Esophagus muscularis mucosa (tissue), 4 donors: ENCODE measurements at regions of chr3 and their contacts with region 1.

Region 1: DNA sequence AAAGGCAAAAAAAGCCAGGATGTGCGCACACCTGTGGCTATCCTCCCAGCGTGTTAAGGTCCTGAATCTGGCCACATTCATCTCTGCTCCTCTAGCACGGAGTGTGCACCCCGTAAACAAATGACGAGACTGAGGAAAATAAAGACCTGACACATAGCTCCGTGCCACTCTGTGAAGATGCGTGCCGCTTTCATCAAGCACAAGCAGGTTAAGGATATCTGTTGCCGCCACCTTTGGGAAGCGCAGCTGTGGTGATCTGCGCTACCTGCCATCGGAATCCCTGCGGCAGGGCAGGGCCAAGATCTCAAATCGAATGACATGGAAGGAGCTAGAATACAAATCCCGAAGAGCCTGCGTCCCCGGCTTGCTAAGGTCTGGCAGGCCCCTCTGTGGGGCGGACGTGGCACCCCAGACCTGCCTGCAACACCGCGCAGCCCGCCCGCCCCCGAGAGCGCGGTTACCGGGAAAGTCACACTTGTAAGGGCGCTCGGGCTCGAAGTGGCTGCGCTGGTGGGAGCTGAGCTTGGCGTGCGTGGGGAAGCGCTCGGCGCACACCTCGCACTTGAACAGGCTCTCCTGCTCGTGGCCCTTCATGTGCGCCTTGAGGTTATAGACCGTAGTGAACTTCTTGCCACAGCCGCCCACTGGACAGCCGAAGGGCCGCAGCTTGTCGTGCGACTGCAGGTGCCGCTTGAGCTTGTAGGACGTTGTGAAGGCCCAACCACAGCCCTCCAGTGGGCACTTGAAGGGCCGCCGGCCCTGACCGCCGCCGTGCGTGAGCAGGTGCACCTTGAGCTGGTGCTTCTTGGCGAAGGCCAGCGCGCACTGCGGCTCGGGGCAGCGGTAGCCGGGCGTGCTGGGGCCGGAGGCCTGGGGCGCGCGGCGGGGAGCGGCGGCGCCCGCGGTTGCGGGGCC is 936 bp downstream of the ZXDC start:
- DNase-seq: no peak
- H3K4me3 ChIP-seq: peak overlapping the region; percentile 67 to 79 (median 71)
- H3K27ac ChIP-seq: peak overlapping the region; percentile 93 to 99 (median 94)
- H3K4me1 ChIP-seq: peaks cover 44 to 56% (median 49%) of the 10 kb centered on the region in 4 donors
- H3K27me3 ChIP-seq: no peaks in the 10 kb centered on the region
- CTCF ChIP-seq: no peak
- EP300 ChIP-seq: no peak
- POLR2A ChIP-seq: no peak

Region 2: GRCh38 chr3:126394575-126395228 is 80.1 kb before region 1 on chr3 and contains the start of gene CFAP100:
- intact Hi-C with region 1: loop called (anchors 5 kb)
- DNase-seq: no peak
- H3K4me3 ChIP-seq: peak within 1 kb of the TSS; percentile 40 to 53 (median 49)
- H3K27ac ChIP-seq: peak within 1 kb of the TSS in 1 of 4 donors; percentile 11
- H3K4me1 ChIP-seq: peaks cover 4 to 14% (median 13%) of the 10 kb centered on the region in 4 donors
- H3K27me3 ChIP-seq: peaks cover 0 to 15% (median 1%) of the 10 kb centered on the region in 4 donors
- CTCF ChIP-seq: no peak
- EP300 ChIP-seq: no peak
- POLR2A ChIP-seq: no peak
- total RNA-seq, gene CFAP100: not detected